WTC11 (cell line): ENCODE measurements at regions of chr19 and their contacts with region 1.

Region 1: DNA sequence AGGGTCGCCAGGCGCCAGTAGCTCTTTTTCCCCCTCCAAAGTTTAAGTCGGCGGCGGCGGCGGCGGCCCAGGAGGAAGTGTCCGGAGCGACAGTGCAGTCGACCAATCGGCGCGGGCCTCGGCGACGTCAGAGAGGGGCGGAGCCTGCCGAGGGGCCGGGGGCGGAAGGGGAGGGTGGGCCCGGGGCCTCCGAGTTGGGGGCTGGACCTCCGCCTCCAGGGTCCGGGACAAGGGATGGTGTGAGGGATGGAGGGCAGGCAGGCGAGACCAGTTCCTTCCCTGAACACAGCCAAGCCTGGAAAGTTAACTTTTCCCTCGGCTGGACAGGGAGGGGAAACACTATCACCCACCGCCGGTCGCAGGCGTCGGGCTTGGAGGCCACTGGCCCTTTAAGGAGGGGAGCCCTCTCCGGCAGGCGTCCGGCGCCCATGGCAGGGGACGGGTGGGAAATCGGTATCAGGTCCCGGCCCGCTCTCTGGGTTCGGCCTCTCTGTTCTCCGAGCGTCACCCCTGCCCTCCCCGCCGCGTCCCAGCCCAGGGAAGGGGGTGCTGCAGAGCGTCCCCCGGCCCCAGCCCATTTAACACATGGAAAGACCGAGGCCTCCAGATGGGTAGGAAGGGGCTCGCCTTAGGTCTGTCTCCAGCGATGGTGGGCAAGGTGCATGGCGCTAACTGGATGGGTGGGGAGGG is at the start of gene PRKD2:
- DNase-seq: peak; percentile 97
- ATAC-seq: peak; percentile 62
- H3K4me3 Mint-ChIP-seq: peak within 1 kb of the TSS; percentile 95
- H3K27ac Mint-ChIP-seq: peak within 1 kb of the TSS; percentile 94
- H3K4me1 Mint-ChIP-seq: peaks cover 18% of the 10 kb centered on the region
- H3K27me3 Mint-ChIP-seq: no peaks in the 10 kb centered on the region
- CTCF ChIP-seq: no peak
- total RNA-seq, gene PRKD2: 78.5 to 100 TPM (median 81.5 TPM) in 3 replicates

Region 2: GRCh38 chr19:46634045-46634655 is 83.0 kb before region 1 on chr19:
- CTCF ChIA-PET with region 1: interaction called, 10 read pairs
- POLR2A ChIA-PET with region 1: interaction called, 3 read pairs
- DNase-seq: peak; percentile 98
- ATAC-seq: peak; percentile 83
- H3K4me3 Mint-ChIP-seq: peak overlapping the region; percentile 72
- H3K27ac Mint-ChIP-seq: no peak overlapping the region
- H3K4me1 Mint-ChIP-seq: peaks cover 27% of the 10 kb centered on the region
- H3K27me3 Mint-ChIP-seq: peaks cover 39% of the 10 kb centered on the region
- CTCF ChIP-seq: no peak

Region 3: DNA sequence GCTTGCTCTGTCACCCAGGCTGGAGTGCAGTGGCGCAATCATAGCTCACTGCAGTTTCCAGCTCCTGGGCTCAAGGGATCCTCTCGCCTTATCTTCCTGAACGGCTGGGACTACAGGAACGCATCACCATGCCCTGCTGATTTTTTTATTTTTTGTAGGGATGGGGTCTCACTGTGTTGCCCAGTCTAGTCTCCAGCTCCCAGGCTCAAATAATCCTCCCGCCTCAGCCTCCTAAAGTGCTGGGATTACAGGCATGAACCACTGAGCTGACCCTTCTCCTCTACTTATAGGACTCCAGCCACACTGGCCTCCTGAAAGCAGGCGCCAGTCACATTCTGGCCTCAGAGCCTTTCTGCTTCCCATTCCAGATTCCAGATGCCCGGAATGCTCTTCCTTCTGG is 66.7 kb before region 1 on chr19:
- CTCF ChIA-PET with region 1: no interaction called
- POLR2A ChIA-PET with region 1: no interaction called
- DNase-seq: no peak
- ATAC-seq: no peak
- H3K4me3 Mint-ChIP-seq: peak overlapping the region; percentile 67
- H3K27ac Mint-ChIP-seq: no peak overlapping the region
- H3K4me1 Mint-ChIP-seq: peaks cover 20% of the 10 kb centered on the region
- H3K27me3 Mint-ChIP-seq: peaks cover 71% of the 10 kb centered on the region
- CTCF ChIP-seq: no peak

Region 4: GRCh38 chr19:46704379-46705076 is 12.7 kb before region 1 on chr19:
- CTCF ChIA-PET with region 1: interaction called, 13 read pairs
- POLR2A ChIA-PET with region 1: interaction called, 6 read pairs
- DNase-seq: peak; percentile 96
- ATAC-seq: peak; percentile 94
- H3K4me3 Mint-ChIP-seq: no peak overlapping the region
- H3K27ac Mint-ChIP-seq: peak overlapping the region; percentile 68; the same call in 1 of the 2 replicates
- H3K4me1 Mint-ChIP-seq: no peaks in the 10 kb centered on the region
- H3K27me3 Mint-ChIP-seq: no peaks in the 10 kb centered on the region
- CTCF ChIP-seq: peak; percentile 100

Region 5: GRCh38 chr19:46759817-46760333 is 42.7 kb after region 1 on chr19:
- CTCF ChIA-PET with region 1: no interaction called
- POLR2A ChIA-PET with region 1: no interaction called
- DNase-seq: no peak
- ATAC-seq: peak; percentile 23
- H3K4me3 Mint-ChIP-seq: no peak overlapping the region
- H3K27ac Mint-ChIP-seq: peak overlapping the region; percentile 39; the same call in 1 of the 2 replicates
- H3K4me1 Mint-ChIP-seq: peaks cover 9% of the 10 kb centered on the region
- H3K27me3 Mint-ChIP-seq: no peaks in the 10 kb centered on the region; the same call in 1 of the 2 replicates
- CTCF ChIP-seq: no peak